CD4-positive, alpha-beta T cell (primary cell): ENCODE measurements at regions of chr16 and their contacts with region 1.

Region 1: GRCh38 chr16:3264137-3265036 is 8.0 kb upstream of the MEFV start:
- DNase-seq: peak; percentile 92 to 98 (median 96)
- ATAC-seq: peak; percentile 85
- H3K4me3 ChIP-seq: peak overlapping the region; percentile 91
- H3K4me3 Mint-ChIP-seq: peak overlapping the region; percentile 92
- H3K27ac ChIP-seq: peak overlapping the region; percentile 95 to 96
- H3K27ac Mint-ChIP-seq: peak overlapping the region; percentile 96
- H3K4me1 ChIP-seq: peaks cover 47% of the 10 kb centered on the region
- H3K4me1 Mint-ChIP-seq: peaks cover 31% of the 10 kb centered on the region
- H3K27me3 ChIP-seq: no peaks in the 10 kb centered on the region
- H3K27me3 Mint-ChIP-seq: no peaks in the 10 kb centered on the region
- CTCF ChIP-seq: no peak

Region 2: GRCh38 chr16:3087243-3088235 is 176.8 kb before region 1 on chr16:
- CTCF ChIA-PET with region 1: no interaction called
- POLR2A ChIA-PET with region 1: no interaction called
- intact Hi-C with region 1: no loop called
- DNase-seq: no peak
- ATAC-seq: no peak
- H3K4me3 ChIP-seq: peak overlapping the region; percentile 44
- H3K4me3 Mint-ChIP-seq: peak overlapping the region; percentile 42
- H3K27ac ChIP-seq: peak overlapping the region; percentile 10 to 22
- H3K27ac Mint-ChIP-seq: peak overlapping the region; percentile 48
- H3K4me1 ChIP-seq: peaks cover 63% of the 10 kb centered on the region
- H3K4me1 Mint-ChIP-seq: peaks cover 57% of the 10 kb centered on the region
- H3K27me3 ChIP-seq: no peaks in the 10 kb centered on the region
- H3K27me3 Mint-ChIP-seq: no peaks in the 10 kb centered on the region
- CTCF ChIP-seq: no peak

Region 3: DNA sequence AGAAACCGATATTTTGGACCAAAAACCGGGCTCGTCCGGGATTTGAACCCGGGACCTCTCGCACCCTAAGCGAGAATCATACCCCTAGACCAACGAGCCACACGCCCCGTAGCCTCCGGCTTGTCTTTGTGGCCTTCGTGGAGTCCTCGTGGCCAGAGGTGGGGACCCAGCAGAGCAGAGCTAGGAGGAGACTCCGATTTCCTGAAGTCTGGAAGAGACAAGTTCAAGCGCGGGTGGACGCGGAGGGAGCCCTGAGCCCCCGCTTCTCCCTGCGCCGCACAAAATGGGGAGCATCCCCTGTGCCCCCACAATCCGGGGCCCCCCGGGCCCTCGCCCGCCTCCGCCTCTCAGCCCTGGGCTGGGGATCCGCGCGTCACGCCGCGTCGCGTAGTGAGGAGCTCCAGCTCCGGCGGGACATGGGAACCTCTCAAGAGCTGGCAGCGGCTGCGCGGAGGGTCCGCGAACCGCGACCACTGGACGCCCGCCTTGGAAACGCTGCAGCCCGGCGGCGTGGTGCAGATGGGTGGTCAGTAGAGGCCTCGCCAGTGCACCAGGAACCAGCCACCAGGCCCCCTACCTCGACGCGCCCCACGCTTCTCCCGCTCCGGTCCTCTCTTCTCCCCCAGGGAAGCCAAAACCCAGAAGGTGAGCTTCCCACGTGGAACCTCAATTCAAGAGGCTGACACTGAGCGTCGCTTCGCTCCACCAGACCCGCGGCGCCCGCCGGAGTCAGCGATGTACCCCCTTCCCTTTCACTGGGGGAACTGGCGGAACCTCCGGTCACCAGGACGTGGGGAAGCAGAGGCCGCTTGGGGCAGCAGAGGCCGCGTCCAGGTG is 81.6 kb before region 1 on chr16:
- CTCF ChIA-PET with region 1: no interaction called
- POLR2A ChIA-PET with region 1: interaction called, 13 read pairs
- intact Hi-C with region 1: loop called (anchors 5 to 10 kb)
- DNase-seq: peak in 8 of 14 experiments; percentile 16 to 75 (median 41)
- ATAC-seq: peak; percentile 45
- H3K4me3 ChIP-seq: peak overlapping the region; percentile 48
- H3K4me3 Mint-ChIP-seq: peak overlapping the region; percentile 82
- H3K27ac ChIP-seq: no peak overlapping the region
- H3K27ac Mint-ChIP-seq: no peak overlapping the region
- H3K4me1 ChIP-seq: peaks cover 27% of the 10 kb centered on the region
- H3K4me1 Mint-ChIP-seq: peaks cover 34% of the 10 kb centered on the region
- H3K27me3 ChIP-seq: peaks cover 65 to 72% of the 10 kb centered on the region in 2 experiments
- H3K27me3 Mint-ChIP-seq: peaks cover 91% of the 10 kb centered on the region
- CTCF ChIP-seq: peak; percentile 38

Region 4: DNA sequence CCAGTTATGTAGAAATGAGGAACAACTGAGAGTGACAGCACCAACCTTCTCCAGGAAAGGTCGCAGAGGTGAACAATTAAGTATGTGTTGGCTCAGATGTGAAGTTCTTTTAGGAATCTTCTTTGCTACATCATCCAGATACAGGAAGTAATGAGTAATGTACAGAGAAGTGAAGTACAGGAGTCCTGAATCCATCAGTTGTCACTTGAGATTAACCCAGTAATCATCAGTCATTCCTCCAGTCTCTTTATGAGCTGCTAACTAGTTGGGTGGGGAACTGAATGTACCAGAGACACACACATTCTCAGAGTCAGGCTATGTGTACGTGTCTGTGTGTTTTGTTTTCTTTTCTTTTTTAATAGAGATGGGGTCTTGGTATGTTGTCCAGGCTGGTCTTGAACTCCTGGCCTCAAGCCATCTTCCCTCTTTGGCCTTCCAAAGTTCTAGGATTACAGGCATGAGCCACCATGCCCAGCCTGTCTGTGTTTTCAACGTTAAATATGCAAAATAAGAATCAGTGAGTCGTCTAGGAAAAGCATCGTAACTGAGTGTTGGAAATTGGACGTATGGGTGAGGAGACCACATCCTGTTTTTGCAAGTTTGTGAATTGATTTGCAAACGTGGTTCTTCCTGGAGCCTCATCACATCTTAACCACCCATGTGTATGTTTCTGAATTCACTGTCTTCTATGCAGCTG is 49.3 kb before region 1 on chr16:
- CTCF ChIA-PET with region 1: no interaction called
- POLR2A ChIA-PET with region 1: interaction called, 22 read pairs
- intact Hi-C with region 1: loop called in 1 of 2 experiments (anchors 1 kb)
- DNase-seq: peak in 7 of 14 experiments; percentile 30 to 89 (median 43)
- ATAC-seq: peak; percentile 86
- H3K4me3 ChIP-seq: no peak overlapping the region
- H3K4me3 Mint-ChIP-seq: peak overlapping the region; percentile 71
- H3K27ac ChIP-seq: peak overlapping the region; percentile 48 to 79
- H3K27ac Mint-ChIP-seq: peak overlapping the region; percentile 96
- H3K4me1 ChIP-seq: peaks cover 48% of the 10 kb centered on the region
- H3K4me1 Mint-ChIP-seq: peaks cover 39% of the 10 kb centered on the region
- H3K27me3 ChIP-seq: no peaks in the 10 kb centered on the region
- H3K27me3 Mint-ChIP-seq: no peaks in the 10 kb centered on the region
- CTCF ChIP-seq: no peak

Region 5: GRCh38 chr16:3305109-3306068 is 41.0 kb after region 1 on chr16 and contains the starts of genes TIGD7 and ZNF75A:
- CTCF ChIA-PET with region 1: no interaction called
- POLR2A ChIA-PET with region 1: interaction called, 14 read pairs
- intact Hi-C with region 1: loop called (anchors 1 to 5 kb)
- DNase-seq: peak; percentile 67 to 96 (median 79)
- ATAC-seq: peak; percentile 92
- H3K4me3 ChIP-seq: peak within 1 kb of the TSS; percentile 91
- H3K4me3 Mint-ChIP-seq: peak within 1 kb of the TSS; percentile 86
- H3K27ac ChIP-seq: peak within 1 kb of the TSS; percentile 76 to 89
- H3K27ac Mint-ChIP-seq: peak within 1 kb of the TSS; percentile 82
- H3K4me1 ChIP-seq: peaks cover 28% of the 10 kb centered on the region
- H3K4me1 Mint-ChIP-seq: peaks cover 22% of the 10 kb centered on the region
- H3K27me3 ChIP-seq: no peaks in the 10 kb centered on the region
- H3K27me3 Mint-ChIP-seq: no peaks in the 10 kb centered on the region
- CTCF ChIP-seq: no peak
- total RNA-seq, gene TIGD7: 1.5 to 1.7 TPM
- total RNA-seq, gene ZNF75A: 41.7 to 42.2 TPM

Region 6: DNA sequence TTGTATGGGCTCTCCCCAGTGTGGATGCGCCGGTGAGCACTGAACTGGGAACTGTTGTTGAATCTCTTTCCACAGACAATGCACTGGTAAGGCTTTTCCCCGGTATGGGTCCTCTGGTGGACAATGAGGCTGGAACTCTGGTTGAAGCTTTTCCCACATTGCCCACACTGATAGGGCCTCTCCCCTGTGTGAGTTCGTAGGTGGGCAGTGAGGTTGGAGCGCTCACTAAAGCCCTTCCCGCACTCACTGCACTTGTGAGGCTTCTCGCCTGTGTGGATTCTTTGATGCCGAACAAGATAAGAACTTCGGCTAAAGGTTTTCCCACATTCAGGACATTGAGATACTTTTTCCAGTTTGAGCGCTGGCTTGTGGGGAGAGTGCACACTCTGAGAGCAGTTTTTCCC is 118.7 kb after region 1 on chr16:
- CTCF ChIA-PET with region 1: no interaction called
- POLR2A ChIA-PET with region 1: no interaction called
- intact Hi-C with region 1: no loop called
- DNase-seq: no peak
- ATAC-seq: no peak
- H3K4me3 ChIP-seq: no peak overlapping the region
- H3K4me3 Mint-ChIP-seq: no peak overlapping the region
- H3K27ac ChIP-seq: no peak overlapping the region
- H3K27ac Mint-ChIP-seq: no peak overlapping the region
- H3K4me1 ChIP-seq: no peaks in the 10 kb centered on the region
- H3K4me1 Mint-ChIP-seq: no peaks in the 10 kb centered on the region
- H3K27me3 ChIP-seq: no peaks in the 10 kb centered on the region
- H3K27me3 Mint-ChIP-seq: no peaks in the 10 kb centered on the region
- CTCF ChIP-seq: no peak

Region 7: DNA sequence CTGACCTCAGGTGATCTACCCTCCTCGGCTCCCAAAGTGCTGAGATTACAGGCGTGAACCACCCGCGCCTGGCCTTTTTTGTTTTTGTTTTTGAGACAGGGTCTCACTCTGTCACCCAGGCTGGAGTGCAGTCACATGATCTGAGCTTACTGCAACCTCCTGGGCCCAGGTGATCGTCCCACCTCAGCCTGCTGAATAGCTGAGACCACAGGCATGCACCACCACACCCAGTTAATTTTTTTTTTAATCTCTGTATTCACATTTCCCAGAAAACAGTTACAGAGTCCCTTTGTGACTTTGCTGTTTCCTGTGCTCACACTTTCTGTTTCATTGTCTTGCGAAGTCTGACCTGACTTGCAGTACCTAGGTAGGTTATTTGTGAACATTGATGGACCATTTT is 239.1 kb after region 1 on chr16:
- CTCF ChIA-PET with region 1: no interaction called
- POLR2A ChIA-PET with region 1: interaction called, 3 read pairs
- intact Hi-C with region 1: loop called in 1 of 2 experiments (anchors 2 kb)
- DNase-seq: peak; percentile 23 to 89 (median 62)
- ATAC-seq: peak; percentile 55
- H3K4me3 ChIP-seq: peak overlapping the region; percentile 25
- H3K4me3 Mint-ChIP-seq: peak overlapping the region; percentile 83
- H3K27ac ChIP-seq: peak overlapping the region; percentile 42 to 66
- H3K27ac Mint-ChIP-seq: peak overlapping the region; percentile 95
- H3K4me1 ChIP-seq: peaks cover 60% of the 10 kb centered on the region
- H3K4me1 Mint-ChIP-seq: peaks cover 72% of the 10 kb centered on the region
- H3K27me3 ChIP-seq: no peaks in the 10 kb centered on the region
- H3K27me3 Mint-ChIP-seq: no peaks in the 10 kb centered on the region
- CTCF ChIP-seq: no peak

Region 8: GRCh38 chr16:3745751-3746355 is 481.5 kb after region 1 on chr16:
- CTCF ChIA-PET with region 1: no interaction called
- POLR2A ChIA-PET with region 1: no interaction called
- intact Hi-C with region 1: no loop called
- DNase-seq: no peak
- ATAC-seq: no peak
- H3K4me3 ChIP-seq: no peak overlapping the region
- H3K4me3 Mint-ChIP-seq: no peak overlapping the region
- H3K27ac ChIP-seq: no peak overlapping the region
- H3K27ac Mint-ChIP-seq: no peak overlapping the region
- H3K4me1 ChIP-seq: peaks cover 3% of the 10 kb centered on the region
- H3K4me1 Mint-ChIP-seq: peaks cover 6% of the 10 kb centered on the region
- H3K27me3 ChIP-seq: no peaks in the 10 kb centered on the region
- H3K27me3 Mint-ChIP-seq: no peaks in the 10 kb centered on the region
- CTCF ChIP-seq: no peak